ENCODE measurements at regions of chr2 and their contacts with region 1.

Region 1: GRCh38 chr2:189412330-189412953 is 28.8 kb upstream of the WDR75 start:
- DNase-seq: no peak
- ATAC-seq: peak; percentile 81
- H3K4me3 ChIP-seq: no peak overlapping the region
- H3K27ac ChIP-seq: no peak overlapping the region
- H3K4me1 ChIP-seq: no peaks in the 10 kb centered on the region
- H3K27me3 ChIP-seq: no peaks in the 10 kb centered on the region
- CTCF ChIP-seq: peak; percentile 53 to 77 (median 58)
- EP300 ChIP-seq: no peak
- POLR2A ChIP-seq: no peak
- RAD21 ChIP-seq: peak; percentile 85

Region 2: GRCh38 chr2:188524519-188525113 is 887.8 kb before region 1 on chr2:
- CTCF ChIA-PET with region 1: interaction called, 10 read pairs
- POLR2A ChIA-PET with region 1: no interaction called
- RAD21 ChIA-PET with region 1: interaction called, 18 read pairs
- SMC1A ChIA-PET with region 1: interaction called, 18 read pairs
- in situ Hi-C with region 1: loop called (anchors 5 kb)
- intact Hi-C with region 1: loop called (anchors 2 kb)
- DNase-seq: no peak
- ATAC-seq: peak; percentile 69; the same call in 2 of the 3 replicates
- H3K4me3 ChIP-seq: no peak overlapping the region
- H3K27ac ChIP-seq: no peak overlapping the region
- H3K4me1 ChIP-seq: no peaks in the 10 kb centered on the region
- H3K27me3 ChIP-seq: no peaks in the 10 kb centered on the region
- CTCF ChIP-seq: peak; percentile 43 to 72 (median 53); a peak in 5 of 6 replicates
- EP300 ChIP-seq: no peak
- POLR2A ChIP-seq: no peak
- RAD21 ChIP-seq: peak; percentile 78

Region 3: DNA sequence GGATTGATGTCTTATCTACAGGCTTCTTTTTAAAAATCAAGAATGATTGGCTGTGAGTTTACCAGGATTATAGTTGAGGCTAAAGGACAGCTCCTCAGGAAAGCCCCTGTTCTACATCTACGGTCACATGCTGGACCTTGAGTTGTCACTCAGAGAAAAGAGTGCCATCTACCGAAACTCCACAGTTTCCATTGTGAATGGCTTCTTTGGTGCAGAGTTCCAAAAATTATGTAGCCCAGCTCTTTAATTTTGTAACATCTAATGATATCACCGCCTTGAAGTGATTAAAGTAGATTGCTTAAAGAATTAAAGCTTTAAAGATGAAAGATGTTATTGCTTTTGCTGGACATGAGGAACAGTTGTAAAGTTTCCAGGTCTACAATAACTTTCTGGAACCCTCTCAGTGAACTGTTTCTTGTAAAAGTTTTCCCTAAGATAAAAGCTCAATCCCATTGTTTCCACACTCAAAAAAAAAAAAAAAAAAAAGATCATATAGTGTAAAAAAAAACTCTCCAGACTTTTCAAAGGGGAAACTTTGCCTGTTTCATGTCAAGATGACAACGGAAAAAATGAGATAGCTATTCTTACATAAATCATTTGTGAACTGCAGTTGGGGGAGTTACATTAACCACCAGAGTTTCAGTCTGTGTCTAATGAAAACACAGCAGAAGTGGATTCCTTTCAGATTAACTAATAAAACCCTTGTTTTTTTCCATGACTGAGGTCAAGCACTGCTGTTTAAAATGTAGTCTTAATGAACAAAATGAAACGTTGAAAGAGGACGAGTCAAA is 434.0 kb before region 1 on chr2:
- CTCF ChIA-PET with region 1: interaction called, 14 read pairs
- POLR2A ChIA-PET with region 1: no interaction called
- RAD21 ChIA-PET with region 1: interaction called, 10 read pairs
- SMC1A ChIA-PET with region 1: interaction called, 4 read pairs
- in situ Hi-C with region 1: no loop called
- intact Hi-C with region 1: loop called (anchors 2 kb)
- DNase-seq: peak; percentile 23
- ATAC-seq: peak; percentile 94
- H3K4me3 ChIP-seq: no peak overlapping the region
- H3K27ac ChIP-seq: no peak overlapping the region
- H3K4me1 ChIP-seq: no peaks in the 10 kb centered on the region
- H3K27me3 ChIP-seq: no peaks in the 10 kb centered on the region
- CTCF ChIP-seq: peak; percentile 20 to 52 (median 24); a peak in 2 of 6 replicates
- EP300 ChIP-seq: peak; percentile 62 to 70; a peak in 3 of 4 replicates
- POLR2A ChIP-seq: no peak
- RAD21 ChIP-seq: peak; percentile 52; the same call in 1 of the 2 replicates

Region 4: DNA sequence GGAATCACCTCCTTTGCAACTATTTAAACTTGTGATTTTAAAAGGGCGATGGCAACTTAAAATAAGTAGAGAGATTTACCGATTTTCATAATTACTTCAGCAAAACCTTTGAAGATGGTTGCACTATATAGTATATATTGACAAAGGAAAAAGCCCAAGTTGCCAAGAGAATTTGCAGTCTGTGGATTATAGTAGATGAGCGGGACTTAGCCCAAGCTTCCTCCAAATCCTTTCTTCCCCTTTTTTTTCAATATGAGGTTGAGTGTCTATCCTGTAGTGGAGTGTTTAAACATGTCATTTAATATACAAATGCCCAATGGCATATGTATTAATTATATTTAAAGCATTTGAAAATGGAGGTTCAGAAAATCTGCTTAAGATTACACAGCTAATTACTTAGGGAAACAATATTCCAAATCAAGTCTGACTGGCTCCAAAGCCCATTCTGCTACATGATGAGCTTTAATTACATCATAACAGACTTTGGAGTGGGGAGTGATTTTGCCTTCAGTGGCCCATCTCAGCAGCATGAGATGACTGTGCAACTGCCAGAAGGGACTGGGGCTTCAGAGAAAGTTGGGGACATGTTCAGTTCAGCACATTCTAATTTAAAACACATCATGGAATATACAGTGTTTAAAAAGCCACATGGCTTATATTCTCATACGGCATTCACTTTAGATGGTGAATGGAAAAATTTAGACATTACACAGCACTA is 365.1 kb before region 1 on chr2:
- CTCF ChIA-PET with region 1: no interaction called
- POLR2A ChIA-PET with region 1: no interaction called
- RAD21 ChIA-PET with region 1: no interaction called
- SMC1A ChIA-PET with region 1: no interaction called
- in situ Hi-C with region 1: no loop called
- intact Hi-C with region 1: no loop called
- DNase-seq: no peak
- ATAC-seq: no peak
- H3K4me3 ChIP-seq: no peak overlapping the region
- H3K27ac ChIP-seq: no peak overlapping the region
- H3K4me1 ChIP-seq: no peaks in the 10 kb centered on the region
- H3K27me3 ChIP-seq: no peaks in the 10 kb centered on the region
- CTCF ChIP-seq: no peak
- EP300 ChIP-seq: no peak
- POLR2A ChIP-seq: no peak
- RAD21 ChIP-seq: no peak

Region 5: GRCh38 chr2:189096769-189097447 is 315.5 kb before region 1 on chr2:
- CTCF ChIA-PET with region 1: interaction called, 33 read pairs
- POLR2A ChIA-PET with region 1: no interaction called
- RAD21 ChIA-PET with region 1: interaction called, 20 read pairs
- SMC1A ChIA-PET with region 1: interaction called, 25 read pairs
- in situ Hi-C with region 1: loop called (anchors 5 kb)
- intact Hi-C with region 1: loop called (anchors 1 kb)
- DNase-seq: no peak
- ATAC-seq: no peak
- H3K4me3 ChIP-seq: no peak overlapping the region
- H3K27ac ChIP-seq: no peak overlapping the region
- H3K4me1 ChIP-seq: no peaks in the 10 kb centered on the region
- H3K27me3 ChIP-seq: no peaks in the 10 kb centered on the region
- CTCF ChIP-seq: no peak
- EP300 ChIP-seq: no peak
- POLR2A ChIP-seq: no peak
- RAD21 ChIP-seq: no peak

Region 6: GRCh38 chr2:189142893-189143759 is 269.3 kb before region 1 on chr2:
- CTCF ChIA-PET with region 1: interaction called, 25 read pairs
- POLR2A ChIA-PET with region 1: no interaction called
- RAD21 ChIA-PET with region 1: interaction called, 8 read pairs
- SMC1A ChIA-PET with region 1: interaction called, 18 read pairs
- in situ Hi-C with region 1: no loop called
- intact Hi-C with region 1: loop called (anchors 2 kb)
- DNase-seq: peak; percentile 16
- ATAC-seq: peak; percentile 99
- H3K4me3 ChIP-seq: no peak overlapping the region
- H3K27ac ChIP-seq: no peak overlapping the region
- H3K4me1 ChIP-seq: no peaks in the 10 kb centered on the region
- H3K27me3 ChIP-seq: no peaks in the 10 kb centered on the region
- CTCF ChIP-seq: peak; percentile 88 to 97 (median 89); a peak in 5 of 6 replicates
- EP300 ChIP-seq: no peak
- POLR2A ChIP-seq: no peak
- RAD21 ChIP-seq: peak; percentile 76

Region 7: DNA sequence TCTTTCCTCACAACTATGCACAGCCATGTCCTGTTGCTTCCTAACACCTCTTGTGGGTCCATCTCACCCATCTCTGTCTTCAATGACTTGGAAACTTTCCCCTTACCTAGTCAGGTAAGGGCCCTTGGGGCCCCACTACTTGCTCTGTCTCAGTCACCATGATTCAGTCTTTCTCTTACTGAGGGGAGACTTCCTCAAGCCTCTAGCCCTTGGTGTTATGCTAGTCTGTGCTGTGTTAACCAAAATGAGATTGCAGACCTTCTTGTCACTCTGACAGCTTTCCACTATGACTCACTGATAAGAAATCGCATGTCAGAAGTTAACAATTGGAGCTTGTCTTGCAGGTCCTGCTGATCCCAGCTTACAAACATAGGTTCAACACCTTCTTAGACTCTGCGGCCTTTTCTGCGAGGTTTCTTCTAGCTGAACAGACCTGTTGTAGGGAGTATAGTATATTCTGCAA is 94.1 kb after region 1 on chr2:
- CTCF ChIA-PET with region 1: no interaction called
- POLR2A ChIA-PET with region 1: no interaction called
- RAD21 ChIA-PET with region 1: no interaction called
- SMC1A ChIA-PET with region 1: no interaction called
- in situ Hi-C with region 1: no loop called
- intact Hi-C with region 1: no loop called
- DNase-seq: no peak
- ATAC-seq: peak; percentile 61
- H3K4me3 ChIP-seq: no peak overlapping the region
- H3K27ac ChIP-seq: no peak overlapping the region
- H3K4me1 ChIP-seq: no peaks in the 10 kb centered on the region
- H3K27me3 ChIP-seq: no peaks in the 10 kb centered on the region; a peak in 1 of 4 replicates
- CTCF ChIP-seq: no peak
- EP300 ChIP-seq: no peak
- POLR2A ChIP-seq: no peak
- RAD21 ChIP-seq: no peak

Region 8: GRCh38 chr2:189685540-189686229 is 273.2 kb after region 1 on chr2:
- CTCF ChIA-PET with region 1: no interaction called
- POLR2A ChIA-PET with region 1: no interaction called
- RAD21 ChIA-PET with region 1: no interaction called
- SMC1A ChIA-PET with region 1: no interaction called
- in situ Hi-C with region 1: no loop called
- intact Hi-C with region 1: no loop called
- DNase-seq: no peak
- ATAC-seq: peak; percentile 54
- H3K4me3 ChIP-seq: no peak overlapping the region
- H3K27ac ChIP-seq: no peak overlapping the region
- H3K4me1 ChIP-seq: peaks cover 5% of the 10 kb centered on the region; the same call in 1 of the 2 replicates
- H3K27me3 ChIP-seq: no peaks in the 10 kb centered on the region
- CTCF ChIP-seq: no peak
- EP300 ChIP-seq: no peak
- POLR2A ChIP-seq: no peak
- RAD21 ChIP-seq: no peak

Measured in GM12878 (cell line).